Natural killer cell (primary cell): ENCODE measurements at regions of chr6 and their contacts with region 1.

Region 1: DNA sequence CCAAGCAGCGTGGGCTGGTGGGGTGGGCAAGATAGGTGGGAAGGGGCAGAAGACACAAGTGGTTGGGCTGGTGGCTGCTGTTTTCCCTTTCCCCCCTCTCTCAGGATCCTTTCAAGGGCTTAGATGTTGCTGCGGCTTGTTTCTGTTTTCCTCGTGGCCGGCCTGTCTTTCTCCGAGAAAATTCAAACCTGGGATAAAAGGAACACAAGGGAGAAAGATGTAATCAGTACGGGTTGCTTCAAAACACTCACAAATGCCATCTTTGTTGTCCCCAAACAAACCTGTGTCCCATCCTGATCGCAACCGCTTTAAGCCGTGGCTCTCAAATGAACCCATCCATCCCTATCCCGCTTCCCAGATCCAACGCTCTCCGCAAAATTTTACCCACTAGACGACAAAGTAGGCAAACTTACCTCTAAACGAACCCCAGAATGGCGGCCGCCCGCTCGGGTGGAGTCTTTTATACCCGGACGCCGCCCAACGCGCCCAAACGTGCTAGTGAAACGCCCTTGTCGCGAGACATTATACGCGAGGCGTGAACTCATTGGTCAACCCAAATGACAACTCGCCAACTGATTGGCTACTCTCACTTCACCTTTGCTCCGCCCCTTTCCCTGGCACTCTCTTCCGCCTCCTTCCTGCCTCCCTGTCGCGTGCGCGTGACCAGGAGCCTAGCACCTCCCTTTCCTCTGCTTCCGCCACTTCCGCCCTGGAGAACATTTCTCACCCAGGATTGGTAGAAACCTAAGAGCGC is at the start of gene PPP1R10:
- DNase-seq: peak; percentile 93 to 100
- ATAC-seq: peak; percentile 75 to 91 (median 80)
- H3K4me3 ChIP-seq: peak within 1 kb of the TSS; percentile 73
- H3K4me3 Mint-ChIP-seq: peak within 1 kb of the TSS; percentile 100
- H3K27ac ChIP-seq: peak within 1 kb of the TSS; percentile 99
- H3K27ac Mint-ChIP-seq: peak within 1 kb of the TSS; percentile 96 to 100
- H3K4me1 ChIP-seq: peaks cover 23% of the 10 kb centered on the region
- H3K4me1 Mint-ChIP-seq: peaks cover 57 to 64% of the 10 kb centered on the region in 2 donors
- H3K27me3 ChIP-seq: no peaks in the 10 kb centered on the region
- H3K27me3 Mint-ChIP-seq: peaks cover 0 to 5% of the 10 kb centered on the region in 2 donors
- CTCF ChIP-seq: no peak
- total RNA-seq, gene PPP1R10: 151 to 222 (median 174) TPM

Region 2: DNA sequence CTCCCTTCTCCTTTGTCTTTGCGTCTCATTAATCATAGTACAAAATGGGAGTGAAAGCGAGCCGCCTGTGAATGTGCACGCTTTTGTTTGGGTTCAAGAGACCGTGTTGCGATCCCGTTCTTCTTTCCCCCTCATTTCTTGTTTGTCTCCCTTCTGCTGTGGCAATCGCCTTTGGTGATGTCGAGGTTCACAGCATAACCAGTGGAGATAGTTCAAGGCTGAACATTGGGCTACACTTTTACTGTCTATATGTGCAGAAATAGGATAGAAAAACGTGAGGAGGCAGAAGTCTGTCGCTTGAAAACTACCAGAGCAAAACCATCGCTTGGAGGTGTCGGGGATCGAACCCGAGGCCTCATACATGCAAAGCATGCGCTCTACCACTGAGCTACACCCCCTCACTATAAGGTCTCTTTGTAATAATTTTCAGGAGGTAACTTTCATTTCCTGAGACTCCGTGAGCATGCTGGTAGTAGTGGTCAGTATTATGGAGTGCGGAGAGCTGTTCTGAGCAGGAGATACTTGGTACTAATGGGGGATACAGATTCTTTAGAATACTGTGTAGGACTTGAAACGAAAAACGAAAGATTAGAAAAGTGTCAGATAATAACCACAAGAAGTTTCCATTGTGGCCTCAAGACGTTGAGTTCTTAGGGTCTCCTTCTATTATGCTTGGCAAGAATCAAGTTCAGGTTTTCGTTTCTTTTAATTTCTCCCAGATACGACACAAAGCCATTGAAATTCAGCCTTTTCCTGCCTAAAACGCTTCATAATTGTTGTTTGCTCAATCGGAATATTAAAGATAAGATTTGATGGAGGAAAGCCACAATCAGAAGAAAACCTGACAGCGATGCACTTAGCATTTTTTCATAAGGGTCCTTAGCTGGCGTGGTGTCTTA is 1799.8 kb before region 1 on chr6:
- intact Hi-C with region 1: no loop called
- DNase-seq: no peak
- ATAC-seq: no peak
- H3K4me3 ChIP-seq: no peak overlapping the region
- H3K4me3 Mint-ChIP-seq: no peak overlapping the region
- H3K27ac ChIP-seq: no peak overlapping the region
- H3K27ac Mint-ChIP-seq: no peak overlapping the region
- H3K4me1 ChIP-seq: peaks cover 5% of the 10 kb centered on the region
- H3K4me1 Mint-ChIP-seq: peaks cover 0 to 16% of the 10 kb centered on the region in 2 donors
- H3K27me3 ChIP-seq: peaks cover 76% of the 10 kb centered on the region
- H3K27me3 Mint-ChIP-seq: peaks cover 71 to 79% of the 10 kb centered on the region in 2 donors
- CTCF ChIP-seq: no peak

Region 3: GRCh38 chr6:30326526-30327260 is 290.3 kb before region 1 on chr6 and contains the start of gene TRIM39:
- intact Hi-C with region 1: loop called (anchors 2 kb)
- DNase-seq: peak; percentile 87 to 96
- ATAC-seq: peak; percentile 55 to 78 (median 64)
- H3K4me3 ChIP-seq: peak within 1 kb of the TSS; percentile 88
- H3K4me3 Mint-ChIP-seq: peak within 1 kb of the TSS; percentile 99
- H3K27ac ChIP-seq: peak within 1 kb of the TSS; percentile 85
- H3K27ac Mint-ChIP-seq: peak within 1 kb of the TSS; percentile 98 to 99
- H3K4me1 ChIP-seq: peaks cover 37% of the 10 kb centered on the region
- H3K4me1 Mint-ChIP-seq: peaks cover 43 to 59% of the 10 kb centered on the region in 2 donors
- H3K27me3 ChIP-seq: no peaks in the 10 kb centered on the region
- H3K27me3 Mint-ChIP-seq: no peaks in the 10 kb centered on the region
- CTCF ChIP-seq: no peak
- total RNA-seq, gene TRIM39: 32.1 to 40.1 (median 38.5) TPM

Region 4: DNA sequence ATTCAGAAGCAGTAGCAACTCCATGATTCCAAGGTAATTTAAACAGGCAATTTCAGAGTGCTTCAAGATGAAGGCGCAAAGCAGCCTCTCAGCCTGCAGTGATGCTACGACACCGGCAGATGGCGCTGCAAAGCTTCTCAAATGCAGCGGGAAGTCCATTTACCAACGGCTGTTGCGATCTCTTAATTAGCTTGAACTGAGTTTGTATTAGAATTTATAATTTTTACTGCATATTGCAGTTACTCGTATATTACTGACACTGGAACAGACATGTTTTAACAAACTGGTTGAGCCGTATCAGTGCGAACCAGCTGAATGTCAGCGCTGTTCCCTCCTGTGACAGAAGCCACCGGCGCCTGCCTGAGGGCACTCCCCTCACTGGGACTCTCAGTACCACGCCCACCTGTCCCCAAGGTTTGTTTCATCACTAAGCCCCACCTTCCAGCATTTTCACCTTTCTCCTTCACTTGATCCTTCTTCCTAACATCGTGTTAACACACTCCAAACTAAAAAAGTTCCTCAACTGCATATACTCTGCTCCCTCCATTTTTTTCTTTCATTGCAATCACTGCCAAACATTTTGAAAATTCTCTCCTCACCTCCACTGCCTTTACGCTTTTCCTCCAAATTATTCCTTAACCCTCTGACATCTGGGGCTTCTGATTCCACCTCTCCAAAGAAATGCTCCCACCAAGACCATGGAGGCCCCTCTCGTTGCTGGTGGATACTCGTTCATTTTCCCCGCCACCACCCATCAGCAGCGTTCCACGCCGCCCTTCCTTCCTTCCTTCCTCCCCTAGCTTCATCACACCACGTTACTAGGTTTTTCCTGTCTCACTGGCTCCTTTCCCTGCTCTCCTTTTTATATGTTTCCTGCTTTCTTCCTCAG is 75.2 kb before region 1 on chr6:
- intact Hi-C with region 1: loop called (anchors 5 kb)
- DNase-seq: peak; percentile 76 to 94
- ATAC-seq: peak; percentile 72 to 83 (median 72)
- H3K4me3 ChIP-seq: peak overlapping the region; percentile 4
- H3K4me3 Mint-ChIP-seq: peak overlapping the region; percentile 86
- H3K27ac ChIP-seq: peak overlapping the region; percentile 32
- H3K27ac Mint-ChIP-seq: peak overlapping the region; percentile 69 to 81
- H3K4me1 ChIP-seq: peaks cover 30% of the 10 kb centered on the region
- H3K4me1 Mint-ChIP-seq: peaks cover 32 to 34% of the 10 kb centered on the region in 2 donors
- H3K27me3 ChIP-seq: no peaks in the 10 kb centered on the region
- H3K27me3 Mint-ChIP-seq: no peaks in the 10 kb centered on the region
- CTCF ChIP-seq: peak; percentile 94

Region 5: DNA sequence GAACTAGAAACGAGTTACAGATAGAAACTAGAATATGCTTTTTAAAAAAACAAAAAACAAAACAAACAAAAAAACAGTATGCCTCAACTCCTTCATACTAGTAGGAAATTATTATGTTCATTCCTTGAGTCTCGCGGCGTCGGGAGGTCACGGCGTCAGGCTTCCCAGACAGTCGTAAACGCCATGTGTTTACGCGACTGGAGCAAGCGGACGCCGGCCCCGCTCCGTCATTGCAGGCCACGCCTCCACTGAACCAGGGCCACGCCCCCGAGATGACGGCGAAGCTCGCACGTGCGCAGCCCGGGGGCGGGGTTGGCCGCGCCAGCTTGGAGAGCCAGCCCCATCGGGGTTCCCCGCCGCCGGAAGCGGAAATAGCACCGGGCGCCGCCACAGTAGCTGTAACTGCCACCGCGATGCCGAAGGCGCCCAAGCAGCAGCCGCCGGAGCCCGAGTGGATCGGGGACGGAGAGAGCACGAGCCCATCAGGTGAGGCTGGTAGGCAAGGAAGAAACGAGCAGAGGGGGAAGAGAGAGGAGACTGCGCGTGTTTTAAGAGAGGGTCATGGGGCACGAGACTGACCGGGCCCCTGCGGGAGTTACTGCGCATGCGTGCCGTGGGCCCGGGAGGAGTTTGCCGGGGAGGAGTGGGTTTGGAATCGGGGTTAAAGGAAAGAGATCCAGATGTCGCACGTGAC is 45.8 kb before region 1 on chr6 and contains the start of gene ABCF1:
- intact Hi-C with region 1: loop called (anchors 1 kb)
- DNase-seq: peak; percentile 100
- ATAC-seq: peak; percentile 93 to 100 (median 94)
- H3K4me3 ChIP-seq: peak within 1 kb of the TSS; percentile 72
- H3K4me3 Mint-ChIP-seq: peak within 1 kb of the TSS; percentile 95
- H3K27ac ChIP-seq: peak within 1 kb of the TSS; percentile 87
- H3K27ac Mint-ChIP-seq: peak within 1 kb of the TSS; percentile 98 to 99
- H3K4me1 ChIP-seq: peaks cover 19% of the 10 kb centered on the region
- H3K4me1 Mint-ChIP-seq: peaks cover 51 to 52% of the 10 kb centered on the region in 2 donors
- H3K27me3 ChIP-seq: no peaks in the 10 kb centered on the region
- H3K27me3 Mint-ChIP-seq: no peaks in the 10 kb centered on the region
- CTCF ChIP-seq: no peak
- total RNA-seq, gene ABCF1: 91.4 to 138 (median 138) TPM

Region 6: GRCh38 chr6:30672445-30673253 is 55.7 kb after region 1 on chr6 and contains the start of gene DHX16:
- intact Hi-C with region 1: loop called (anchors 2 kb)
- DNase-seq: peak; percentile 85 to 96
- ATAC-seq: peak; percentile 88 to 97 (median 89)
- H3K4me3 ChIP-seq: peak within 1 kb of the TSS; percentile 76
- H3K4me3 Mint-ChIP-seq: peak within 1 kb of the TSS; percentile 87
- H3K27ac ChIP-seq: peak within 1 kb of the TSS; percentile 24
- H3K27ac Mint-ChIP-seq: peak within 1 kb of the TSS; percentile 83 to 85
- H3K4me1 ChIP-seq: peaks cover 17% of the 10 kb centered on the region
- H3K4me1 Mint-ChIP-seq: peaks cover 27 to 49% of the 10 kb centered on the region in 2 donors
- H3K27me3 ChIP-seq: no peaks in the 10 kb centered on the region
- H3K27me3 Mint-ChIP-seq: no peaks in the 10 kb centered on the region
- CTCF ChIP-seq: peak; percentile 68
- total RNA-seq, gene DHX16: 27.3 to 35.7 (median 27.7) TPM

Region 7: DNA sequence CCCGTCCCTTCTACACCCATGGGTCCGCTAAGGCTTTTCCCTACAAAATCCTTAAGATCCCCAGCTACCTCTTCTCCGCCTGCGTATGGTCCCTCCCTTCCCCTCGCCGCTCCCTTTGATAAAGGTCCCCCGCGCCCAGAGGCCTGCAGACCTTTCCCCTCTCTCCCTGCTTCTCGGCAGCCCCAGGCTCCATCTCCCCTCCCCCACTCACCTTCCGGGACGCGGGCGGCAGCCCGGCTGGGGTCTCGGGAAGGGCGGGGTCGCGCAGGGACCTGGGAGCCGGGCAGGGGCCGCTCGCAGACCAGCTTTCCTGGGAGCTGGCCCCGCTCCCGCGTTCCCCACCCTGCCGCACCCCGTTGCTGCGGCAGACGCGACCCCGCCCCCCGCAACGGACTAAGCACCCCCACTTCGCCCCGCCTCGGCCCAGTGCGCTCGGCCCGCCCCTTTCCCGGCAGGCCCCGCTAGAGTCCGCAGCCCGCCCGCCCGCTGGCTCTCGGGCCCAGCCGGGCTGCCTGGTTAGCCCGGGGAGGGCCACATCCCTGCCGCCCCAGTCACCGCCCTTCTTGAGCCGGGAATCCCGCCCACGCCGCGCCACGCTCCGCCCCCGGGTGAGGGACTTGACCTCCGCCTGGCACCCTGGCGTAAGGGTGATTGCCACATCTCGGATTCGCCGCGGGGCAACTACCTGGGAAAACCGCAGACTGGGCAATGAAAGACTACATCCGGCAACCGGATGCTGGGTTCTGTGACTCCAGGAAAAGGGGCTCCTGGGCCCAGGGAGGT is 125.5 kb after region 1 on chr6 and contains the start of gene FLOT1:
- intact Hi-C with region 1: loop called (anchors 5 kb)
- DNase-seq: peak; percentile 90 to 92
- ATAC-seq: peak; percentile 78 to 90 (median 78)
- H3K4me3 ChIP-seq: peak within 1 kb of the TSS; percentile 72
- H3K4me3 Mint-ChIP-seq: peak within 1 kb of the TSS; percentile 95
- H3K27ac ChIP-seq: peak within 1 kb of the TSS; percentile 84
- H3K27ac Mint-ChIP-seq: peak within 1 kb of the TSS; percentile 94 to 96
- H3K4me1 ChIP-seq: peaks cover 54% of the 10 kb centered on the region
- H3K4me1 Mint-ChIP-seq: peaks cover 50 to 65% of the 10 kb centered on the region in 2 donors
- H3K27me3 ChIP-seq: no peaks in the 10 kb centered on the region
- H3K27me3 Mint-ChIP-seq: no peaks in the 10 kb centered on the region
- CTCF ChIP-seq: no peak
- total RNA-seq, gene FLOT1: 73.1 to 113 (median 94.2) TPM